ENCODE measurements at regions of chr2 and their contacts with region 1.

Region 1: GRCh38 chr2:191501561-191502168 is 176.3 kb upstream of the NABP1 start:
- DNase-seq: no peak
- H3K4me3 ChIP-seq: no peak overlapping the region
- CTCF ChIP-seq: peak; percentile 34

Region 2: GRCh38 chr2:191078165-191078867 is 423.3 kb before region 1 on chr2:
- CTCF ChIA-PET with region 1: no interaction called
- POLR2A ChIA-PET with region 1: no interaction called
- DNase-seq: no peak
- H3K4me3 ChIP-seq: no peak overlapping the region
- CTCF ChIP-seq: no peak

Region 3: GRCh38 chr2:191150600-191151330 is 350.9 kb before region 1 on chr2 and contains the start of gene STAT4:
- CTCF ChIA-PET with region 1: interaction called, 43 read pairs
- POLR2A ChIA-PET with region 1: no interaction called
- DNase-seq: no peak
- H3K4me3 ChIP-seq: peak within 1 kb of the TSS; percentile 58
- CTCF ChIP-seq: no peak

Region 4: DNA sequence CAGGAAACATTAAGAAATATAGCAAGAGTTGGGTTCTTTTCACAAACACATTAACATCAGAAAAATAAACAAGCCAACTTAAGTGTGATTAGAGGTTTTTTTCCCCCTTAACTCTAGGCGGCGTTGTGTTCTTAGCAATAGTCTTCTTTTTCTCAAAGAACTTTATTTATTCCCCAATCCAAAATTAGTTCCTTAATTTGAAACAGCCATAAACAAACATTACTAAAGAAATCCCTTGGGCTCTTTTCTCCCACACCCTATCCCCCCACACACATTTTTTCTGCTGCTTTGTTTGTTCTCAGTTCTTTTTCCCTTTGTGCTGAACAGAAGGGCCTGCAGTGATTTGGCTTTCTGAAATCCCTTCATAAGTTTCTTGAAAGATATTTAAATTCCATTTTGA is 269.7 kb before region 1 on chr2:
- CTCF ChIA-PET with region 1: interaction called, 37 read pairs
- POLR2A ChIA-PET with region 1: no interaction called
- DNase-seq: no peak
- H3K4me3 ChIP-seq: no peak overlapping the region
- CTCF ChIP-seq: peak; percentile 47

Region 5: GRCh38 chr2:191345788-191346187 is 155.9 kb before region 1 on chr2:
- CTCF ChIA-PET with region 1: interaction called, 11 read pairs
- POLR2A ChIA-PET with region 1: no interaction called
- DNase-seq: no peak
- H3K4me3 ChIP-seq: no peak overlapping the region
- CTCF ChIP-seq: no peak

Region 6: GRCh38 chr2:191486584-191487320 is 14.9 kb before region 1 on chr2:
- CTCF ChIA-PET with region 1: interaction called, 77 read pairs
- POLR2A ChIA-PET with region 1: interaction called, 3 read pairs
- DNase-seq: peak; percentile 97
- H3K4me3 ChIP-seq: no peak overlapping the region
- CTCF ChIP-seq: no peak

Region 7: GRCh38 chr2:191783416-191783815 is 281.8 kb after region 1 on chr2:
- CTCF ChIA-PET with region 1: no interaction called
- POLR2A ChIA-PET with region 1: no interaction called
- DNase-seq: no peak
- H3K4me3 ChIP-seq: no peak overlapping the region
- CTCF ChIP-seq: no peak